ENCODE measurements at regions of chr1 and their contacts with region 1.

Region 1: DNA sequence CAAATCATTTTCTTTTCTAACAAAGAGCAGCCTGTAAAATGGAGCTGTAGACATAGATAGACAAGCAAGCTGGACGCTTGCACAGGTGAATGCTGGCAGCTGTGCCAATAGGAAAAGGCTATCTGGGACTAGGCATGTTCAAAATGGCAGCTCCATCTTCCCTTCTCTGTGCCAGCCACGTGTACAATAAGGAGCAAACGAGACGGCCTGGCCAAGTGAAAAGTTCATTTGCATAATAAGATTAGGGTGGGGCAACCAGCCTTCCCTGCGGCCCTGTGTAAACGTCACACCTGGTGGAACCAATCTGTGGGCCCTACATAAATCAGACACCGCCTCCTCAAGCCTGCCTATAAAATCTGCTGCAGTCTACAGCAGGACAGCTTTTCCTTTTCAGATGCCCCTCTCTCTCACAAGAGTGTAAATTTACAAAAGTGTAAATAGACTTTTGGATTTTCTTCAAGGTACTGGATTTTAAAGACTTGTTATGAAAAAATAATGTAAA is 16.6 kb upstream of the EDEM3 start:
- DNase-seq: no peak
- H3K4me3 ChIP-seq: no peak overlapping the region
- H3K27ac ChIP-seq: no peak overlapping the region
- H3K4me1 ChIP-seq: no peaks in the 10 kb centered on the region
- H3K27me3 ChIP-seq: peaks cover 4 to 10% of the 10 kb centered on the region in 2 experiments
- CTCF ChIP-seq: no peak
- POLR2A ChIP-seq: no peak

Region 2: DNA sequence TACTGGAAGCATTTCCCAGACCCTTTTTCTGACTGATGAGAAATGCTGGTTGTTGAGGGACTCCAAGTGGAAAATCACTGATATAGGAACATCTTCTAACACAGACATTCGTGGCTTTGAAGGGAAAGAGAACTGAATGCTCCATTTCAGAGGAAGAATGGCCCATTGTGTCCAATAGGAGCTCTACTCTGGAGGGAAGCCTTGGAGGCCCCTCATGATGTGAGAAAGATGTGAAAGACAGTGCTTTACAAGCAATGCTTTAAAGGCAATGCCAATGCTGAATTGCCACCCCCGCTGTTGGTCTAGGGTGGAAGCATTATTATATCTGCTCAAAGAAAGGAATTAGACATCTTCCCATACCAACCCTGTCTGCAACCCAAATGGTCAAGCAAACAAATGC is 1366.8 kb before region 1 on chr1:
- CTCF ChIA-PET with region 1: no interaction called
- POLR2A ChIA-PET with region 1: no interaction called
- dilution Hi-C with region 1: no loop called
- intact Hi-C with region 1: no loop called
- DNase-seq: no peak
- H3K4me3 ChIP-seq: no peak overlapping the region
- H3K27ac ChIP-seq: no peak overlapping the region
- H3K4me1 ChIP-seq: no peaks in the 10 kb centered on the region
- H3K27me3 ChIP-seq: peaks cover 2 to 5% of the 10 kb centered on the region in 2 experiments
- CTCF ChIP-seq: no peak
- POLR2A ChIP-seq: no peak

Region 3: GRCh38 chr1:184781941-184782340 is 10.7 kb after region 1 on chr1:
- CTCF ChIA-PET with region 1: no interaction called
- POLR2A ChIA-PET with region 1: no interaction called
- dilution Hi-C with region 1: no loop called
- intact Hi-C with region 1: loop called (anchors 1 kb)
- DNase-seq: no peak
- H3K4me3 ChIP-seq: no peak overlapping the region
- H3K27ac ChIP-seq: no peak overlapping the region
- H3K4me1 ChIP-seq: no peaks in the 10 kb centered on the region
- H3K27me3 ChIP-seq: no peaks in the 10 kb centered on the region
- CTCF ChIP-seq: no peak
- POLR2A ChIP-seq: no peak

Measured in endothelial cell of umbilical vein (primary cell).